ENCODE measurements at regions of chr1 and their contacts with region 1.

Region 1: DNA sequence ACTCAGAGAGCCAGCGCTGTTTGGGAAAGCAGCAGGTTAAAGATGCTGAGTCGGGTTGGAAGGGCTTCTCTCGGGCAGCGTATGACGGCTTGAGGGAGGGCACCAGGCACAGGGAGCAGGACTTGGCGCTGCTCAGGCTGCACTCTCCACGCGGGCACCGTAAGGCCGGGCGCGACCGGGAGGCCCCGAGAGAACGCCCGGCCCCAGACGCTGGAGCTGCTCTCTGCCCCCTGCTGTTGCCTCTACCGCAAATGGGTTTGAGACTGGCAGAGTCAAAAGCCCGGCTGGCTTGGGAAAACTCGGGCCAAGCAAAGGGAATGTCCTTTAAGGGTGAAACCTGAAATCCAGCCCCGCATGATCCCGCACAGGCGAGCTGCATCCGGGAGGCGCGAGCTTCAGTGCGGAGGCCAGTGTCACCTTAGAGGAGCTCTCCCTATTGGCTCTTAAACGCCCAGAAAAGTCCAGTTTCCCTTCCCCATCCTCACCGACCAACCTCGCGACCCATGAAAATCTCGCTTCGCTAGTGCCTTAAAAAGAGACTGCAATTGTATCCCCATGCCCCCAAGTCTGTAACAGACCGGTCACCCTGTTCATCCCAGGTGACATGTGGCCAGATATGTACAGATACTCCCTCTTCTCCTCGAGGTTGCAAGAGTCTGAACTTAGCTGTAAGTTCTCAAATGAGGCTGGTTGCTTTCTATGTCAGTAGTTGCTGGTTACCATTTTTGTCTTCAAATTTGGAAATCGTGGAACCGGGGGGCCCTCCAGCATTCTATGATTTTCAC is 1.1 kb downstream of the PRRX1 start:
- DNase-seq: peak in 4 of 5 donors; percentile 46 to 75 (median 62)
- ATAC-seq: peak; percentile 37 to 75 (median 72)
- H3K4me3 ChIP-seq: peak overlapping the region; percentile 49 to 93 (median 79)
- H3K27ac ChIP-seq: peak overlapping the region; percentile 58 to 98 (median 94)
- H3K4me1 ChIP-seq: peaks cover 0 to 50% (median 3%) of the 10 kb centered on the region in 12 donors
- H3K27me3 ChIP-seq: peaks cover 0 to 82% (median 9%) of the 10 kb centered on the region in 9 donors
- CTCF ChIP-seq: peak in 6 of 12 donors; percentile 6 to 44 (median 30)
- POLR2A ChIP-seq: peak in 1 of 2 donors; percentile 28

Region 2: DNA sequence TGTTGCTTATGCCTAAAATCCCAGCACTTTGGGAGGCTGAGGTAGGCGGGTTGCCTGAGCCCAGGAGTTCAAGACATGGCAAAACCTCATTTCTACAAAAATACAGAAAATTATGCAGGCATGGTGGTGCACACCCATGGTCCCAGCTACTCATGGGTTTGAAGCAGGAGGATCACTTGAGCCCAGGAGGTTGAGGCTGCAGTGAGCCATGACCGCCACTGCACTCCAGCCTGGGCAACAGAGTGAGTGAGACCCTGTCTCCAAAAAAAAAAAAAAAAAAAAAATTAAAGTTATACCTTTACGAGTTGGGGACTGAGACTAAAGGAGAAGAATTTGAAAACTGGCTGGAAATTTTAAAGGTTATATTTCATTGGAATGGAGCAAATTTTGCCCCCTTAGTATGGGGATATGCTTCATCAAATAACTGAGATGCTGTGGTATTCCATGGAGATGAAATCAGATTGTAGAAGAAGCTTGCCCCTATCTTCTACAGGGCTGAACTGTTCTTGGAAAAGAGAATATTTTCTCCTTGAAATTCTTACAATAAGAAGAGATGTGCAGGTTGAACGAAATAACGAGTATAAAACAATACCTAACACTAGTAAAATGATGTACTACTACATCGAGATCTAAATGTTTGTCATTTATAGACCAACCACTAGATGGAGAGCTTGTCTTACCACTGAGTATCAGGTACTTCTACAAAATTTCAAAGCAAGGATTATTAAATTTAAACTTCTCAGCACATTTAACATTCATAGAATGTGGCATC is 736.4 kb before region 1 on chr1:
- intact Hi-C with region 1: loop called in 4 of 10 experiments (anchors 10 kb)
- DNase-seq: no peak
- ATAC-seq: peak in 3 of 4 donors; percentile 58 to 71 (median 63)
- H3K4me3 ChIP-seq: no peak overlapping the region
- H3K27ac ChIP-seq: no peak overlapping the region
- H3K4me1 ChIP-seq: peaks cover 0 to 20% (median 6%) of the 10 kb centered on the region in 12 donors
- H3K27me3 ChIP-seq: no peaks in the 10 kb centered on the region
- CTCF ChIP-seq: peak; percentile 65 to 86 (median 69)
- POLR2A ChIP-seq: no peak

Region 3: GRCh38 chr1:170074250-170075157 is 590.5 kb before region 1 on chr1 and contains the start of gene KIFAP3:
- intact Hi-C with region 1: loop called in 2 of 10 experiments (anchors 5 to 10 kb)
- DNase-seq: peak; percentile 97 to 99 (median 99)
- ATAC-seq: peak; percentile 99 to 100 (median 100)
- H3K4me3 ChIP-seq: peak within 1 kb of the TSS; percentile 40 to 83 (median 70)
- H3K27ac ChIP-seq: peak within 1 kb of the TSS; percentile 58 to 92 (median 86)
- H3K4me1 ChIP-seq: peaks cover 0 to 32% (median 17%) of the 10 kb centered on the region in 12 donors
- H3K27me3 ChIP-seq: no peaks in the 10 kb centered on the region
- CTCF ChIP-seq: peak; percentile 47 to 76 (median 60)
- POLR2A ChIP-seq: peak in 1 of 2 donors; percentile 75
- total RNA-seq, gene KIFAP3: 31.0 to 75.0 (median 53.5) TPM

Region 4: GRCh38 chr1:170410401-170411166 is 254.4 kb before region 1 on chr1:
- intact Hi-C with region 1: loop called in 2 of 10 experiments (anchors 10 kb)
- DNase-seq: peak in 2 of 5 donors; percentile 21 to 34
- ATAC-seq: peak; percentile 71 to 94 (median 79)
- H3K4me3 ChIP-seq: no peak overlapping the region
- H3K27ac ChIP-seq: peak overlapping the region in 9 of 12 donors; percentile 18 to 79 (median 57)
- H3K4me1 ChIP-seq: peaks cover 4 to 43% (median 14%) of the 10 kb centered on the region in 12 donors
- H3K27me3 ChIP-seq: no peaks in the 10 kb centered on the region
- CTCF ChIP-seq: no peak
- POLR2A ChIP-seq: no peak

Region 5: DNA sequence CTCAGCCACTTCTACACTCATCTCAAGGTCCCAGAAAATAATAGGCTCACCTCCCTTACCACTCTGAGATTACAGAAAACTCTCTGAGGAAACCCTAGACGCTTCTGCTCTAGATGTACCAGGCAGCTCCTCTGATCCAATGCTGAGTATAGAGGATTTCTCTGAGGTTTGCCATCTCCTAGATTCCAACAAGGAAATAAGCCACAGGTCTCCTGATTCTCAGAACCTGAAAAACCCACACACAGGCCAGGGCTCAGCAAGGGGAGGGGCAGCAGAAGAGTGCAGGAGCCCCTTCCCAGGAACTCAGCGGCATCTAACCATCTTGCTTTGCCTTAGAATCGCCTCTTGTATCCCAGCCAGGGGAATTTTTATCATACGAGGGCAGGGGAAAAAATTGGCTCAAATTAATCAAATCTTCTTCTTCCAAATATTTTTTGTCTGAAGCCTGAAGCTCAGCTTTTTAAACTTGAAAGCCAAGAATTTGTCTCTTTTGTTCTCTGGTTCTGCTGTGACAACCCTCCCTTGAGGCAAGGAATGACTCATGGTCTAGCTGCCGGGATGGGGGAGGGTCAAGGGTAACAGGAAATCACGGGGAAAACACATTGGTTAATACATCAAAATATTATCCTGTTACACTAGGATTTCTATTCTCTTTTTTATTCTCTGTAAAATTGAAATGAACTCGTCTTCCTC is 102.2 kb before region 1 on chr1:
- intact Hi-C with region 1: loop called in 1 of 10 experiments (anchors 10 kb)
- DNase-seq: peak; percentile 66 to 82 (median 71)
- ATAC-seq: peak; percentile 79 to 95 (median 88)
- H3K4me3 ChIP-seq: peak overlapping the region in 6 of 12 donors; percentile 3 to 34 (median 18)
- H3K27ac ChIP-seq: peak overlapping the region; percentile 3 to 88 (median 71)
- H3K4me1 ChIP-seq: peaks cover 0 to 29% (median 12%) of the 10 kb centered on the region in 12 donors
- H3K27me3 ChIP-seq: no peaks in the 10 kb centered on the region
- CTCF ChIP-seq: no peak
- POLR2A ChIP-seq: no peak

Region 6: GRCh38 chr1:170872663-170873062 is 207.6 kb after region 1 on chr1:
- intact Hi-C with region 1: loop called in 1 of 10 experiments (anchors 5 kb)
- DNase-seq: no peak
- ATAC-seq: no peak
- H3K4me3 ChIP-seq: no peak overlapping the region
- H3K27ac ChIP-seq: peak overlapping the region in 1 of 12 donors; percentile 53
- H3K4me1 ChIP-seq: peaks cover 0 to 18% (median 4%) of the 10 kb centered on the region in 12 donors
- H3K27me3 ChIP-seq: no peaks in the 10 kb centered on the region
- CTCF ChIP-seq: no peak
- POLR2A ChIP-seq: no peak

Region 7: DNA sequence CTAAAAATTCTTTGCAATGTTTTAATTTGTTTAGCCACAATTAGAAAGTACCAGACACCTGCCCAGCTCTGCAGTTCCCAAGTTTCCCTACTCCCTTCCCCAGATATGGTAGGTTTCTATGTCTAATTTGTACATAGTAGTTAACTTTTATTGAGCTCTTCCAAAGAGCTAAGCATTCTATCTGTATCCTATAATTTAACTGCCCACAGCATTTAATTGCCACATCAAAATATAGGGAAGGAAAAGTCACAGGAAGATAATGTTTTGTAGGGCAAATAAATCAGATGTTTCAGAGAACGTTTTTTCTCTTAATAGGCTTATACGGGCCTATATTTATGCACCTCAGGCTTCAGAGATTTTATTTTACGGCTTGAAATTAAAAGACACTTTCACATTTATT is 410.0 kb after region 1 on chr1:
- intact Hi-C with region 1: no loop called
- DNase-seq: no peak
- ATAC-seq: no peak
- H3K4me3 ChIP-seq: no peak overlapping the region
- H3K27ac ChIP-seq: no peak overlapping the region
- H3K4me1 ChIP-seq: no peaks in the 10 kb centered on the region
- H3K27me3 ChIP-seq: no peaks in the 10 kb centered on the region
- CTCF ChIP-seq: no peak
- POLR2A ChIP-seq: no peak